CD8-positive, alpha-beta T cell (primary cell): ENCODE measurements at regions of chr7 and their contacts with region 1.

Region 1: GRCh38 chr7:816300-816750 is 16.0 kb upstream of the SUN1 start:
- DNase-seq: peak; percentile 93 to 98 (median 96)
- ATAC-seq: peak; percentile 94
- H3K4me3 ChIP-seq: peak overlapping the region; percentile 40 to 53
- H3K4me3 Mint-ChIP-seq: peak overlapping the region; percentile 61
- H3K27ac ChIP-seq: no peak overlapping the region
- H3K27ac Mint-ChIP-seq: no peak overlapping the region
- H3K4me1 ChIP-seq: peaks cover 34% of the 10 kb centered on the region
- H3K4me1 Mint-ChIP-seq: peaks cover 54% of the 10 kb centered on the region
- H3K27me3 ChIP-seq: no peaks in the 10 kb centered on the region
- H3K27me3 Mint-ChIP-seq: peaks cover 2% of the 10 kb centered on the region
- CTCF ChIP-seq: no peak

Region 2: DNA sequence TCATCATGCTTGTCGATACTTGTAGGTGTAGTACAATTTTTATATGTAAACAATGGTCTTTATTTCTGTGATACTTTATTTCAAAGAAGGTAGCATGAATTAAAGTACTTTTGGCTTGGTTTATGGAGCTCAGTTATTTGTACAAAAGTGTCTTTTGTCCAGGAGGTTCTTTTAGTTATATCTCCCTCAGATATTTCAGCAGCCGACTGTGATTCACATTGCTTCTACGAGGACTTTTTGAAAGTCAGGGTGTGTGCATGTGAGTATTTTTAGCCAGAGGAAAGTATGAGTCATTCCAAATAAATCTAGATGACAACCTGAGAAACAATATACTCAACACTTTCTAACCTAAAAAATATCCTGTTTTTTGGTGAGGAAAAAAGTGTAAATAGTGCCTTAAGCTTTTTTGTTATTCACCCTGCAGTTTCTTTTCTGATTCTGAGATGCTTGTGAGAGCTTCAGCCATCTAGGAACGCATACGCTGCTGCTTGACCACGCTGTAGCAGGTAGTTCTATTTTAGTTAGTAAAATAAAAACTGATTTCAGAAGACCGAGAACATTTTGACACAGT is 15.4 kb after region 1 on chr7:
- CTCF ChIA-PET with region 1: no interaction called
- POLR2A ChIA-PET with region 1: interaction called, 3 read pairs
- intact Hi-C with region 1: loop called in 1 of 2 experiments (anchors 1 kb)
- DNase-seq: peak in 3 of 9 experiments; percentile 23 to 61 (median 30)
- ATAC-seq: peak; percentile 15
- H3K4me3 ChIP-seq: no peak overlapping the region
- H3K4me3 Mint-ChIP-seq: peak overlapping the region; percentile 75
- H3K27ac ChIP-seq: peak overlapping the region; percentile 66 to 75
- H3K27ac Mint-ChIP-seq: peak overlapping the region; percentile 92
- H3K4me1 ChIP-seq: peaks cover 27% of the 10 kb centered on the region
- H3K4me1 Mint-ChIP-seq: peaks cover 48% of the 10 kb centered on the region
- H3K27me3 ChIP-seq: no peaks in the 10 kb centered on the region
- H3K27me3 Mint-ChIP-seq: no peaks in the 10 kb centered on the region
- CTCF ChIP-seq: no peak

Region 3: DNA sequence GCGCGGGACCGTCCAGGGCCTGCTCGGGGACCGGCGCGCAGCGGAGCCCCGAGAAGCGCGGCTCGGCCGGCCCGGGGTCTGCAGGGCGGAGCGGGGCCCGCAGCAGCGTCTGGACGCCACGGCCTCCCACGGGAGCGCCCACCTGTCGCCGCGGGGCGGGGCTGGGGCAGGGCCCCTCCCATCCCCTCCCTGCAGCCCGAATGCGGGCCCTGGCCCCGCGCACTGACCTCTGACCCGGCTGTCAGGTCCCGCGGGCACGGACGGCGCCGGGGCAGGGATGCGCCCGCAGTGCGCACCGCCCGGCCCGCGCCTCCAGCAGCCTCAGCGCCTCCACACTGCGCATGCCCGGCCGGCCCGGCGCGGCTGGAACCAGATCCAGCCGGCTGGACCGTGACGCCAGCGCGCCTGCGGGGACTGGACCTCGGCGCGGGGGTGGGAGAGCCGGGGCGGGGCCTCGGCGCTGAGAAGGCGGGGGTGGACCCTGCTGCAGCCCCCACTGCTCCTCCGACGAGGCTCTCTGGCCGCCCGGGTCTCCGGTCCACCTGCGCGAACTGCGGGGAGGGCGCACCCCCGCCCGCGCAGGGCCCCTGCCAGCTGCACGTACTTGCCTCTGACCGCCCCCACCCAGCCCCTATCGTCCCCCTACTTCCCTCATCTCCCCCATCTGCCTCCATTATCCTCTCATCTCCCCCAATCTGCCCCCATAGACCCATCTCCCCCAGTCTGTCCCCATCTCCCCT is 211.9 kb after region 1 on chr7:
- CTCF ChIA-PET with region 1: no interaction called
- POLR2A ChIA-PET with region 1: no interaction called
- intact Hi-C with region 1: no loop called
- DNase-seq: peak; percentile 67 to 90 (median 76)
- ATAC-seq: peak; percentile 72
- H3K4me3 ChIP-seq: peak overlapping the region; percentile 36 to 57
- H3K4me3 Mint-ChIP-seq: peak overlapping the region; percentile 82
- H3K27ac ChIP-seq: peak overlapping the region; percentile 48 to 81
- H3K27ac Mint-ChIP-seq: no peak overlapping the region
- H3K4me1 ChIP-seq: peaks cover 33% of the 10 kb centered on the region
- H3K4me1 Mint-ChIP-seq: peaks cover 34% of the 10 kb centered on the region
- H3K27me3 ChIP-seq: no peaks in the 10 kb centered on the region
- H3K27me3 Mint-ChIP-seq: no peaks in the 10 kb centered on the region
- CTCF ChIP-seq: no peak